ENCODE measurements at regions of chr1 and their contacts with region 1.

Region 1: GRCh38 chr1:229440851-229441537 is 7.1 kb upstream of the ACTA1 start:
- DNase-seq: no peak
- H3K4me3 Mint-ChIP-seq: no peak overlapping the region
- H3K27ac Mint-ChIP-seq: peak overlapping the region; percentile 58
- H3K4me1 Mint-ChIP-seq: peaks cover 23% of the 10 kb centered on the region
- H3K27me3 Mint-ChIP-seq: peaks cover 24% of the 10 kb centered on the region

Region 2: DNA sequence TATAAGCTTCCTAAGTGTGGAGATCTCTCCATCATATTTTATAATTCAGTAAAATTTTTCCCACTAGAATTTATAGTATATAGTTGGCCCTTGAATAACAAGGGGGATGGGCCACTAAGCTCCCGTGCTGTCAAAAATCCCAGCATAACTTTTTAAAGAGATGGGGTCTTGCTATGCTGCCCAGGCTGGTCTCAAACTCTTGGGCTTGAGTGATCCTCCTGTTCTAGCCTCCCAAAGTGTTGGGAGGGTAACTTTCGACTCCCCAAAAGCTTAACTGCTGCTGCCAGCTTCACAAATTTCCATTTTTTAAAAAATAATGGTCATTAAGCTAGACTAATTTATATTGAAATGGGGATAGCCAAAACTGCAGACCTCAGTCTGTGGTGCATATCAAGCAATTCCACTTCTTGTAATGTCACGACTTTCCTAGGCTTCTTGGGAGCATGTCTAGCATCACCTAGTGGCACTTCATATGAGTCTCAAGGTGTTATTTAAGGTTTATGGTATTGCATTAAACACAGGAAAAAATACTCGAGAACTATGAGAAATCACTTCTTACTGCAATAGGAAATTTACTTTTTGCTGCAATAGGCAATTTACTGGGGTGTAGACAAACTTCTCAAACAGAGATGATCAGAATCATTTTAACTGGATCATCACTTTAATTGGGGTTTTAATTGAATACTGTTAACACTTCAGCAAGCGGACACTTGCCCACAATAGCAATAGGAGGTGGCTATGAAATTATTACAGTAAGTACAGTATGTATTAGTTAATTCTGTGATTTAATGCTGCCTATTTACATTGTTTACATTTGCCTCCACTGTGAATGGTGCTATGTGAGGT is 12.2 kb after region 1 on chr1:
- CTCF ChIA-PET with region 1: interaction called, 10 read pairs
- POLR2A ChIA-PET with region 1: interaction called, 4 read pairs
- DNase-seq: no peak
- H3K4me3 Mint-ChIP-seq: no peak overlapping the region
- H3K27ac Mint-ChIP-seq: no peak overlapping the region
- H3K4me1 Mint-ChIP-seq: peaks cover 6% of the 10 kb centered on the region
- H3K27me3 Mint-ChIP-seq: no peaks in the 10 kb centered on the region

Region 3: DNA sequence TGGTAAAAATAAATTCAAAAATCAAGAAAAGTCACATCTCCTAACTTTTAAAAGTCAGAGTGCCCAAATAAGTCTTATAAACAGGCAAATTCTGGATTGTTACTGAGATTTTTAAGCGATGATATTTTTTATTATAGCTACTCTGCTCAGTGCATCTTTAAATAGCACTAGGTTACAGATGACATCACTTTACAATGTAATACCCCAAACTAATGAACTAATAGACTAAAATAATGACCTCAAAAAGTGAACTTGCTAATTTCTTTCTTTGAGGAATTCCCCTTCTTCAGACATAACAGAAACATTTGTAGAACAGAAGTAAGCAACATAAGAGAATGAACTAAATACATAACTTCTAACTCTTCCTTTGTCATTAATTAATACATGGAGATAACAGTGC is 25.9 kb after region 1 on chr1:
- CTCF ChIA-PET with region 1: no interaction called
- POLR2A ChIA-PET with region 1: no interaction called
- DNase-seq: no peak
- H3K4me3 Mint-ChIP-seq: no peak overlapping the region
- H3K27ac Mint-ChIP-seq: no peak overlapping the region
- H3K4me1 Mint-ChIP-seq: no peaks in the 10 kb centered on the region
- H3K27me3 Mint-ChIP-seq: no peaks in the 10 kb centered on the region

Measured in activated CD4-positive, alpha-beta memory T cell treated with anti-CD3 and anti-CD28 coated beads, Interleukin-2, amount 10 ng/mL, durations not matched to agents 7 days and 5 days (primary cell).